ENCODE measurements at regions of chr6 and their contacts with region 1.

Region 1: GRCh38 chr6:123380257-123380656 is 256.5 kb downstream of the TRDN start:
- DNase-seq: no peak
- ATAC-seq: peak; percentile 90
- H3K4me3 ChIP-seq: no peak overlapping the region
- H3K27ac ChIP-seq: no peak overlapping the region
- H3K4me1 ChIP-seq: no peaks in the 10 kb centered on the region
- H3K27me3 ChIP-seq: peaks cover 26% of the 10 kb centered on the region
- CTCF ChIP-seq: peak; percentile 12 to 43 (median 29); a peak in 4 of 6 replicates
- POLR2A ChIP-seq: no peak
- RAD21 ChIP-seq: peak; percentile 42

Region 2: GRCh38 chr6:122869437-122870024 is 510.7 kb before region 1 on chr6:
- CTCF ChIA-PET with region 1: interaction called, 41 read pairs
- POLR2A ChIA-PET with region 1: no interaction called
- RAD21 ChIA-PET with region 1: interaction called in 1 of 2 experiments, 4 read pairs
- intact Hi-C with region 1: loop called (anchors 1 kb)
- DNase-seq: peak; percentile 43
- ATAC-seq: peak; percentile 94
- H3K4me3 ChIP-seq: no peak overlapping the region
- H3K27ac ChIP-seq: no peak overlapping the region
- H3K4me1 ChIP-seq: 0 out of 4 replicates have a peak, but pooled peaks cover 0 to 4% of the 10 kb centered on the region in 2 experiments
- H3K27me3 ChIP-seq: peaks cover 25% of the 10 kb centered on the region
- CTCF ChIP-seq: peak; percentile 53 to 72 (median 69); a peak in 5 of 6 replicates
- POLR2A ChIP-seq: no peak
- RAD21 ChIP-seq: peak; percentile 82

Region 3: GRCh38 chr6:122947355-122947754 is 432.9 kb before region 1 on chr6:
- CTCF ChIA-PET with region 1: interaction called, 10 read pairs
- POLR2A ChIA-PET with region 1: no interaction called
- RAD21 ChIA-PET with region 1: no interaction called
- intact Hi-C with region 1: no loop called
- DNase-seq: peak; percentile 18
- ATAC-seq: peak; percentile 77
- H3K4me3 ChIP-seq: no peak overlapping the region
- H3K27ac ChIP-seq: no peak overlapping the region
- H3K4me1 ChIP-seq: no peaks in the 10 kb centered on the region
- H3K27me3 ChIP-seq: peaks cover 16% of the 10 kb centered on the region; the same call in 1 of the 2 replicates
- CTCF ChIP-seq: peak; percentile 23 to 70 (median 62); a peak in 5 of 6 replicates
- POLR2A ChIP-seq: no peak
- RAD21 ChIP-seq: peak; percentile 48

Region 4: DNA sequence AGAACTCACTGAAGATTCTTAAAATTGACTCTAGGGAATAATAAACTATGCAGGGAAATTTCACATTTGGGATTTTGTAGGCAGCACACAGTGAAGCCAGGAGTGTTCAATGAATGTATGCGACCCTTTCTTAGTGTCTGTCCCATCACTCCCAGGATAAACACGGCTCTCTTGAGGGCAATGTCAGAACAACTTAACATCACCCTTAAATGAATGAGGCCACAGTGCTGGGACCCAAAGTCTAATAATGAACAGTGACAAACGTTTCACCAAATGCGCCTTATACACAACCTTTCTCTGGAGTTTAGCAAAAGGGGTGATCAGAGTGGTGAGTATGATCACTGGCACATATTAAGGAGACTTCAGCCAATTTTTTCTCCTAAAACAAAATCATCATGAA is 146.9 kb before region 1 on chr6:
- CTCF ChIA-PET with region 1: no interaction called
- POLR2A ChIA-PET with region 1: no interaction called
- RAD21 ChIA-PET with region 1: no interaction called
- intact Hi-C with region 1: no loop called
- DNase-seq: no peak
- ATAC-seq: no peak
- H3K4me3 ChIP-seq: no peak overlapping the region
- H3K27ac ChIP-seq: no peak overlapping the region
- H3K4me1 ChIP-seq: no peaks in the 10 kb centered on the region
- H3K27me3 ChIP-seq: peaks cover 35% of the 10 kb centered on the region
- CTCF ChIP-seq: no peak
- POLR2A ChIP-seq: no peak
- RAD21 ChIP-seq: no peak

Region 5: DNA sequence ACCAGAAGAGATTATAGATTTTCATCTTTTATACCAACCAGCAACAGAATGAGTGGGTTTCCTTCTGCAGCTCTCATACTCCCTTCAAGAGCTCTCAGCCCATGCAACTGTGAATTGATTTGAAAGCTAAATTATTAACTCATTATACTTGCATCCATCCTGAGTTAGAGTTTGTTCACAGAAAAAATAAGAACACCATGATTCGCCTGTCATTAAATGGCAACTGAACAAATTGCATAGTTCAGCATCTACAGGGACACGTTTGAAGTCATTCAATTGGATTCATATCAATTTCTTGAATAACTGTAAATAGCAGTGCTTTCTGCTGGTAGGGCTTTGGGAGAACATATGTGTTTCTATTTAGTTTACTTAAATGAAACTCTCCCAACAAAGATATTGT is 489.1 kb after region 1 on chr6:
- CTCF ChIA-PET with region 1: no interaction called
- POLR2A ChIA-PET with region 1: no interaction called
- RAD21 ChIA-PET with region 1: no interaction called
- intact Hi-C with region 1: no loop called
- DNase-seq: no peak
- ATAC-seq: no peak
- H3K4me3 ChIP-seq: no peak overlapping the region
- H3K27ac ChIP-seq: no peak overlapping the region
- H3K4me1 ChIP-seq: no peaks in the 10 kb centered on the region
- H3K27me3 ChIP-seq: no peaks in the 10 kb centered on the region
- CTCF ChIP-seq: no peak
- POLR2A ChIP-seq: no peak
- RAD21 ChIP-seq: no peak

Measured in HCT116 (cell line).